HepG2 (cell line): ENCODE measurements at regions of chr7 and their contacts with region 1.

Region 1: GRCh38 chr7:20219446-20220292 is 2.5 kb upstream of the MACC1 start:
- DNase-seq: peak; percentile 99
- ATAC-seq: peak; percentile 99
- H3K4me3 ChIP-seq: peak overlapping the region in 1 of 3 experiments; percentile 24; a peak in 1 of 6 replicates
- H3K27ac ChIP-seq: peak overlapping the region; percentile 90
- H3K4me1 ChIP-seq: peaks cover 44% of the 10 kb centered on the region
- H3K27me3 ChIP-seq: no peaks in the 10 kb centered on the region
- CTCF ChIP-seq: peak; percentile 36
- EP300 ChIP-seq: peak; percentile 69 to 94; a peak in 3 of 4 replicates
- POLR2A ChIP-seq: peak; percentile 41 to 46; a peak in 2 of 4 replicates
- RAD21 ChIP-seq: peak; percentile 10; the same call in 1 of the 2 replicates

Region 2: GRCh38 chr7:19708397-19709248 is 511.0 kb before region 1 on chr7 and contains the start of gene POLR1F:
- CTCF ChIA-PET with region 1: no interaction called
- POLR2A ChIA-PET with region 1: interaction called, 8 read pairs
- in situ Hi-C with region 1: no loop called
- intact Hi-C with region 1: loop called (anchors 5 kb)
- DNase-seq: peak; percentile 89
- ATAC-seq: peak; percentile 98
- H3K4me3 ChIP-seq: peak within 1 kb of the TSS; percentile 90 to 100 (median 100)
- H3K27ac ChIP-seq: peak within 1 kb of the TSS; percentile 68
- H3K4me1 ChIP-seq: peaks cover 34% of the 10 kb centered on the region
- H3K27me3 ChIP-seq: peaks cover 0 to 6% of the 10 kb centered on the region in 2 experiments; a peak in 1 of 5 replicates
- CTCF ChIP-seq: peak; percentile 95
- EP300 ChIP-seq: peak; percentile 22 to 47; a peak in 1 of 4 replicates
- POLR2A ChIP-seq: peak; percentile 95 to 98
- RAD21 ChIP-seq: 0 out of 2 replicates have a peak, but pooled peaks have one; percentile 50
- total RNA-seq, gene POLR1F: 14.9 and 25.3 TPM in 2 replicates

Region 3: GRCh38 chr7:20141666-20142065 is 78.0 kb before region 1 on chr7:
- CTCF ChIA-PET with region 1: no interaction called
- POLR2A ChIA-PET with region 1: no interaction called
- in situ Hi-C with region 1: no loop called
- intact Hi-C with region 1: no loop called
- DNase-seq: no peak
- ATAC-seq: no peak
- H3K4me3 ChIP-seq: no peak overlapping the region
- H3K27ac ChIP-seq: no peak overlapping the region
- H3K4me1 ChIP-seq: no peaks in the 10 kb centered on the region
- H3K27me3 ChIP-seq: no peaks in the 10 kb centered on the region
- CTCF ChIP-seq: no peak
- EP300 ChIP-seq: no peak
- POLR2A ChIP-seq: no peak
- RAD21 ChIP-seq: no peak

Region 4: GRCh38 chr7:20172736-20173334 is 46.8 kb before region 1 on chr7:
- CTCF ChIA-PET with region 1: no interaction called
- POLR2A ChIA-PET with region 1: no interaction called
- in situ Hi-C with region 1: no loop called
- intact Hi-C with region 1: loop called (anchors 2 kb)
- DNase-seq: peak; percentile 33
- ATAC-seq: peak; percentile 93
- H3K4me3 ChIP-seq: no peak overlapping the region
- H3K27ac ChIP-seq: no peak overlapping the region
- H3K4me1 ChIP-seq: no peaks in the 10 kb centered on the region
- H3K27me3 ChIP-seq: no peaks in the 10 kb centered on the region
- CTCF ChIP-seq: peak; percentile 66
- EP300 ChIP-seq: no peak
- POLR2A ChIP-seq: no peak
- RAD21 ChIP-seq: no peak

Region 5: DNA sequence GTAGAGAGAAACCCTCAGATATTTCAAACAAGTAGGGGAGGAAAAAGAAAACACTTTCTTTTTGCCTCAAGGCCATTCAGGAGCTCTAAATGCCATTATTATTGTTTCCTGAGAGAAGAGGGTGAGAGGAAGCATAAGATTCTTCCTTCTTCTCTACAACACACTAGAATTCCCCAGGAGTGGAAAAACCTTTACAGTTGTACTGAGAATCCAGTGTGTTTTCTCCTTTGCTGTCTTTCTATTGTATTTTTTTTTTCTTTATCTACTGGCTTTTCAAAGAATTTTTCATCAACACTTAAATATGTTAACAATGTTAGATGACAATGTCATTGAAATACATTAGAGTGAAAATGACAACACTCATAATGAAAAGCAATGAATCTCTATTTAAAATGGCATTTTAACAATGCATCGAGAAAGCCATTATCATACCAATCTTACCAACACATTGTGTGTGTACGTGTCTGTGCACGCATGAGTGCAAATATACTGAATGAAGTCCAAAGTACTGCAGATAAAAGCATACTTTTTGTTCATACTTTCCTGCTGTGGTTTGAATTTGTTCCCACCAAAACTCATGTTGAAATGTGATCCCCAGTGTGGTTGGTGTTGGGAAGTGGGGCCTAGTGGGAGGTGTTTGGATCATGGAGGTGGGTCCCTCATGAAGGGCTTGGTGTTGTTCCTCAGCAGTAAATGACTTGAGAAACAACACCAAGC is 21.7 kb after region 1 on chr7:
- CTCF ChIA-PET with region 1: no interaction called
- POLR2A ChIA-PET with region 1: interaction called, 5 read pairs
- in situ Hi-C with region 1: no loop called
- intact Hi-C with region 1: loop called (anchors 2 kb)
- DNase-seq: peak; percentile 20
- ATAC-seq: no peak
- H3K4me3 ChIP-seq: no peak overlapping the region
- H3K27ac ChIP-seq: no peak overlapping the region
- H3K4me1 ChIP-seq: peaks cover 16% of the 10 kb centered on the region
- H3K27me3 ChIP-seq: no peaks in the 10 kb centered on the region
- CTCF ChIP-seq: no peak
- EP300 ChIP-seq: no peak
- POLR2A ChIP-seq: no peak
- RAD21 ChIP-seq: no peak

Region 6: DNA sequence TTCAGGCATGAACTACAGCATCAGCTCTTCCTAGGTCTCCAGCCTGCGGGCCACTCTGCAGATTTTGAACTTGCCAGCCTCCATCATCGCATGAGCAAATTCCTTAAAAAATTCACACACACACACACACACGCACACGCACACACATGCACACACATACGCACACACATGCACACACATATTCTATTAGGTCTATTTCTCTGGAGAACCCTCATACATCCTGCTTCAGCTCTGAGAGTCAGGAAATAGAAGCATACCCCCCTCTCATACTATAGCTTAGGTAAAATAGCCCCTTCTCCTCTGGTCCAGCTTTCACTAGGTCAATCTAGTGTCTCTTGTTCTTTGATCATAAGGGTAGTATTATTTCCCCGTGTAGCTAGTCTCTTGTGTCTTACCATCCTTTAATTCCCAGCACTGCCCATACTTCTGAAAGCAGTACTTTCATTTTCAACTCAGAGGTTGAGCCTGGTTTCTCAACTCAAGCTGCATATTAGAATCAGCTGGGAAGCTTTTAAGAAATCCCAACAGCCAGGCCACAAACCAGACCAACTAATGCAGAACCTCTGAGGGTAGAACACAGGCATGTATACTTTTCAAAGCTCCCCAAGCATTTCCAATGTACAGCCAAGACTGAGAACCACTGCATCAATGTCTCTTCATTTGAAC is 80.1 kb after region 1 on chr7:
- CTCF ChIA-PET with region 1: no interaction called
- POLR2A ChIA-PET with region 1: no interaction called
- in situ Hi-C with region 1: no loop called
- intact Hi-C with region 1: no loop called
- DNase-seq: no peak
- ATAC-seq: no peak
- H3K4me3 ChIP-seq: no peak overlapping the region
- H3K27ac ChIP-seq: no peak overlapping the region
- H3K4me1 ChIP-seq: peaks cover 12% of the 10 kb centered on the region
- H3K27me3 ChIP-seq: no peaks in the 10 kb centered on the region
- CTCF ChIP-seq: no peak
- EP300 ChIP-seq: no peak
- POLR2A ChIP-seq: no peak
- RAD21 ChIP-seq: no peak

Region 7: DNA sequence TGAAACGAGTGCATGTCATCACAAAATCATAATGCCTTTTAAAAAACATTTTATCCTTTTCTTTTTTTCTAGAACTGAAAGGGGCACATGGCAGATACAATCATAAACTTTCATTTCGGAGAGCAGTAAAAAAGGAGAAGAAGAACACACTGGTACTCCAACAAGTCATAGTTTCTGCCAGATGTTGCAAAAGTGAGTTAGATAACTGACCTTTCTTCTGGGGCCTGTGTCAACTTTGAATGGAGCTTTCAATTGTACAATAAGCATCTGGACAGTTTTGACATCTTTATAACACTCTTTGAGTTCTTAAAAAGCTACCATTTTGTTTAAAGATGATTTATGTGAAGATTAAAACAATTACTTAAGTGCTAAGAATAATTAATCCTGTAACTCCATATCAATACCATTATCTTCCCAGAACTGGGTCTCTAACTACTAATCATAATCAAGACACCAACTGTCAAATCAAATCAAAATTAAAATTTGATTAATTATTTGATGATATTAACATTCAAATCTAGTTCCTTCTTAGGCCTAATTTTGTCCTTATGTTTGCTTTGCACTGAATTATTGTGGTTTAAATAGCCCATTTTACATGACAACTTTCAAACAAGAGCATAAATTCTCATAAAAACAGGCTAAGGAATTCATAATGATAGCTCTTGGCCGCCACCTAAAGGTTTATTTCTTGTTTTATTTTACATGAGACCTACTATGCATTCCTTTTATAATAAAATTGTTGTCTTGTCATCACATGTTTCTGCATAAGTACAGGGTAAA is 91.5 kb after region 1 on chr7:
- CTCF ChIA-PET with region 1: no interaction called
- POLR2A ChIA-PET with region 1: no interaction called
- in situ Hi-C with region 1: no loop called
- intact Hi-C with region 1: loop called (anchors 2 kb)
- DNase-seq: peak; percentile 25
- ATAC-seq: no peak
- H3K4me3 ChIP-seq: no peak overlapping the region
- H3K27ac ChIP-seq: no peak overlapping the region
- H3K4me1 ChIP-seq: peaks cover 11% of the 10 kb centered on the region
- H3K27me3 ChIP-seq: no peaks in the 10 kb centered on the region
- CTCF ChIP-seq: peak; percentile 42
- EP300 ChIP-seq: no peak
- POLR2A ChIP-seq: no peak
- RAD21 ChIP-seq: no peak

Region 8: DNA sequence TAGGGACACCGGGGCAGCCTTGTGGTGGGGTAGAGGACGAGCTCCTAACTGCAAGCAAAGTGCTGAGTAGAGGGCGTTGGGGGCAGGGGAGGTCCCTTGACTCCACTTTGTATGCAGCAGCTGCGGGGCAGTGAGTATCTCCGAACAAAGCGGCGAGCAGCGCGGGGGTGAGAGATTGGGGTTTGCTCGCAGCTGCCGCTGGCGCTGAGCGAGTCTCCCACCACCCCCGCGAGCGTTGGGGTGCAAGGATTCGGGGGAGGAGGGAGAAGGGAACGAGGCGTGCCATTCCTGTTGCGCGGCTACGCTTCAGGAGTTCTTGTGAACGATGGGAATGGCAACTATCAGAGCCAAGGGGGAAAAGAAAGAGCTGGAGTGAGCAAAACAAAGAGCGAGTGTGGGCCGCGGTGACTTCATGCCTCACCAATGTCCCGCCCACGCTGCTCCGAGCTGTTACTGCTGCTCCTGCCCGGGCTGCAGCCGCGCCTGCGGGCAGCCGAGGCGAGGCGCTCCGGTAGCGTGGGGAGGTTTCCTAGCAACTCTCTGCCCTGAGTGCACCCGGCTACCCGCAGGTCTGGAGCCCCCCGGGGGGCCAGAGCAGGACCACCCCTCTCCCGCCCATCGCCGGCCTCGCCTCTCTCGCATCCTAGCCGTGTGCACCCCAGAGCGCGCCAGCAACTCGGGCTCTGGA is 110.7 kb after region 1 on chr7 and contains the start of gene ITGB8:
- CTCF ChIA-PET with region 1: no interaction called
- POLR2A ChIA-PET with region 1: interaction called, 6 read pairs
- in situ Hi-C with region 1: no loop called
- intact Hi-C with region 1: loop called (anchors 5 kb)
- DNase-seq: peak; percentile 36
- ATAC-seq: peak; percentile 91
- H3K4me3 ChIP-seq: peak within 1 kb of the TSS; percentile 53 to 73 (median 56)
- H3K27ac ChIP-seq: no peak within 1 kb of the TSS
- H3K4me1 ChIP-seq: peaks cover 29% of the 10 kb centered on the region
- H3K27me3 ChIP-seq: peaks cover 2 to 30% of the 10 kb centered on the region in 2 experiments; a peak in 4 of 5 replicates
- CTCF ChIP-seq: no peak
- EP300 ChIP-seq: no peak
- POLR2A ChIP-seq: no peak
- RAD21 ChIP-seq: no peak
- total RNA-seq, gene ITGB8: 0.06 TPM in 1 of 2 replicates, not detected in the other